Activated CD4-positive, alpha-beta T cell treated with anti-CD3 and anti-CD28 coated beads for 36 hours (primary cell): ENCODE measurements at regions of chr3 and their contacts with region 1.

Region 1: GRCh38 chr3:114383875-114384557 is 90.2 kb downstream of the TIGIT start:
- DNase-seq: peak; percentile 83
- ATAC-seq: peak; percentile 93
- H3K4me3 Mint-ChIP-seq: peak overlapping the region; percentile 53
- H3K27ac Mint-ChIP-seq: peak overlapping the region; percentile 84
- H3K4me1 Mint-ChIP-seq: peaks cover 11% of the 10 kb centered on the region
- H3K27me3 Mint-ChIP-seq: no peaks in the 10 kb centered on the region

Region 2: DNA sequence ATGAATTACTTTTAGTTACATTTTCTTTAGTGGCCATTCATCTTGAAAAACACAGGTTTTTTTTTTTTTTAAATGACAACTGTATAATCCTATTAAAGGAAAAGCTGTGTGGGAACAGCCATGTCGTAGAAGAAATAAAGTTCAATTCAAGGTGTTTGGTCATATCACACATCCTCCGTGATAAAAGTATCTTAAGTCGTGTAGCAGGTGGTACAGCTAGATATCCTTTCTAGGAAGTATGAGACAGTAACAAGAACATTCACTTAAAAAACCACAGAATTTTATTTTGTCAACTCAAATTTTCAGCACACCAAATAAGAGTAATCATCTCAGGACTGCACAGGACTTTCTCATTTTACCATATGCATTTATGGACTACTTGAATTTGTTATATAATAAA is 420.1 kb before region 1 on chr3:
- CTCF ChIA-PET with region 1: no interaction called
- POLR2A ChIA-PET with region 1: no interaction called
- intact Hi-C with region 1: no loop called
- DNase-seq: no peak
- ATAC-seq: no peak
- H3K4me3 Mint-ChIP-seq: no peak overlapping the region
- H3K27ac Mint-ChIP-seq: no peak overlapping the region
- H3K4me1 Mint-ChIP-seq: no peaks in the 10 kb centered on the region
- H3K27me3 Mint-ChIP-seq: no peaks in the 10 kb centered on the region

Region 3: DNA sequence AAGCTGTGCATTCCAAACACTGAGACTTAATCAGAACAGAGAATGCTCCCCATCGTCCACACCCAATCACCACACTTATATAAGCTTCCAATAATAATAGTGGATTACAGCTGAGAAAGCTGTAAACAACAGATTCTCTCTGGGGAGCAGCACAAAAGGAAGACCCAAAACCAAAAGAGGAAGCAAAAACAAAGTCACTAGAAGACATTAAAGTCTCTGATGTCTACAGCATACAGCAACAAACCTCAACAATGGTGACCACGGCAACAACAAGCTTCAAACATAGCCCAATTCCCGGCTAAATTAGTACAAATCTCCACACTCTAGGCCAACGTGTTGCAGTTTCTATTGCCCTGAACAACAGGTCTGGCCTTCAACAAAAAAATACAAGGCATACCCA is 398.5 kb before region 1 on chr3:
- CTCF ChIA-PET with region 1: no interaction called
- POLR2A ChIA-PET with region 1: no interaction called
- intact Hi-C with region 1: no loop called
- DNase-seq: no peak
- ATAC-seq: no peak
- H3K4me3 Mint-ChIP-seq: no peak overlapping the region
- H3K27ac Mint-ChIP-seq: no peak overlapping the region
- H3K4me1 Mint-ChIP-seq: peaks cover 2% of the 10 kb centered on the region
- H3K27me3 Mint-ChIP-seq: no peaks in the 10 kb centered on the region

Region 4: DNA sequence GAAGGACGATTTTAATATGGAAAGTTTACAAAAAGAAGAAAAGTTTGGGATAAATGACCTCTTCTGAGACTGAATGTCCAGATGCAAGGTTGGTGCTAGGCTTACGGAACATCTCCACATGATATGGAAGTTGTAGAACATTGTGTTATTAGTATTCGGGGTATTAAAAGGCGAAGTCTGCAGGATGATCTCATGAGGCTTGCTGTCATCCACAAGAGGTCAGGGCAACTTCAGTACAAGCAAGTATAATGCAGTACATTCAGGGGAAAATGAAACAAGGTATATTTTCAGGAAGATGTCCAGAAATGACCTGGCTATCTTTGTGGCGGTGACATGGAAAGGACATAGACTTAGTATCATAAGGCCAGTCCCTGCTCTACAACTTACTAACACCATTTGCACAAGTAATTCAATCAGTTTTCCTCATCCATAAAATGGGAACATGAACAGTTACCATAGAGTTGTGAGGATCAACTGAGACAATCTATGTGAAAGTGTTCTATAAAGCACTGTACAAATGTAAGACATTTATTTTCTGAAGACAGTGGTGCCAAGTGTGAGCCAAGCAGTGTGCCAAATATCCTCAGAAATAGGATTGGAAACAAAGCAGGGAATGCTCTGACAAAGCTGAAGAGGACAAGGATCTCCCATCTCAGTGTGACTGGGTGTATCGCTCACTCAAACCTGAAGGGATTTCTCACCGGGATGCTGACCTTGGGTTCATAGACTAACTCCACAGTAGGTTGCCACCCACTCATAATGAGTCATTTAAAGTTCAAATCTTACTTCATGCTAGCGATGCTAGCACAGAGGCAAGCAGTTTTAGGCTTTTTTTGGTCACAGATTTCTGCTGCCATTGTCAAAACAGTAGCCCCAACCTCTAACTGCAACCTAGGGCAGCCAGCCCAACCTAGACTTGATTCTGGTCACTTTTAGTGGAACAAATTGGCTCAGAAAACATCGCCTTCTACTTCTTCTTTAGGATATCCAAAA is 28.1 kb after region 1 on chr3:
- CTCF ChIA-PET with region 1: interaction called, 89 read pairs
- POLR2A ChIA-PET with region 1: no interaction called
- intact Hi-C with region 1: loop called in 1 of 2 experiments (anchors 1 kb)
- DNase-seq: peak; percentile 59
- ATAC-seq: peak; percentile 95
- H3K4me3 Mint-ChIP-seq: no peak overlapping the region
- H3K27ac Mint-ChIP-seq: peak overlapping the region; percentile 48
- H3K4me1 Mint-ChIP-seq: peaks cover 25% of the 10 kb centered on the region
- H3K27me3 Mint-ChIP-seq: no peaks in the 10 kb centered on the region

Region 5: DNA sequence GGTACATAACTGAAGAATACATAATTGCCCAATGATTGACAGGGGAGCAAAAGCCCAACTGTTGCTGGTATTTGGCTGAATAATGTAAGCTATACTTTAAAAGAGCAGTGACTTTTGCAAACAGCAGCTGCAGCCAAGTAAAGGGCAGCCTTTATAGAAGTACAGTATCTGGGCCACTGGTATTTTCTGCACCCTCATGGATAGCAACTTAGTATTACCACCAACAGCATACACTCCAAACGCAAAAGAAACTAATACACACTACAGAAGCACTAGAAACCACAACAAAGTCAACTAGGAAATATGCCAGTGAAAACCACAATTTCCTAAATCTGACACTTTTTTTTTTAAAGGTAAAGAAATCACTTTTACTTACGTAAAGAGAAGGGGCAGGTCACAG is 116.0 kb after region 1 on chr3:
- CTCF ChIA-PET with region 1: interaction called, 3 read pairs
- POLR2A ChIA-PET with region 1: no interaction called
- intact Hi-C with region 1: loop called in 1 of 2 experiments (anchors 10 kb)
- DNase-seq: no peak
- ATAC-seq: peak; percentile 84
- H3K4me3 Mint-ChIP-seq: no peak overlapping the region
- H3K27ac Mint-ChIP-seq: no peak overlapping the region
- H3K4me1 Mint-ChIP-seq: peaks cover 34% of the 10 kb centered on the region
- H3K27me3 Mint-ChIP-seq: peaks cover 11% of the 10 kb centered on the region

Region 6: DNA sequence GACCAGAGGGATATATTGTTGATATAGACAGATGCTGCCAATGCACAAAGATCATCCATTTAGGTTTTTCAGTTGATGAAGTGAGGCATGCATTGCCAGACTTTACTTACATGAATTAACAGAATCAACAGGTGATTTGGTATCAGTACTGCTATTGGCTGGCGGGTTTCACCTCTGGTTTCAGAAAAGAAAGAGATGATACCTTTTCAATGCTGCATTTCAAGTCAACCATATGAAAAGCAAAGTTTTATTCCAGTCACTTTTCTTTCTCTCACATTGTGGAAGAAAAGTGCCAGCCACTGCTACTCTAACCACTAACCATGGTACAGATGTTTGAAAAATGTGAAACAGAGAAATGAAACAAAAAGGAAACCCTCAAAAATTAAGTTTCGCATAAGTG is 198.9 kb after region 1 on chr3:
- CTCF ChIA-PET with region 1: no interaction called
- POLR2A ChIA-PET with region 1: no interaction called
- intact Hi-C with region 1: no loop called
- DNase-seq: peak; percentile 35
- ATAC-seq: peak; percentile 75
- H3K4me3 Mint-ChIP-seq: no peak overlapping the region
- H3K27ac Mint-ChIP-seq: no peak overlapping the region
- H3K4me1 Mint-ChIP-seq: peaks cover 9% of the 10 kb centered on the region
- H3K27me3 Mint-ChIP-seq: no peaks in the 10 kb centered on the region

Region 7: GRCh38 chr3:115085197-115085865 is 701.3 kb after region 1 on chr3:
- CTCF ChIA-PET with region 1: no interaction called
- POLR2A ChIA-PET with region 1: no interaction called
- intact Hi-C with region 1: loop called in 1 of 2 experiments (anchors 10 kb)
- DNase-seq: no peak
- ATAC-seq: no peak
- H3K4me3 Mint-ChIP-seq: no peak overlapping the region
- H3K27ac Mint-ChIP-seq: peak overlapping the region; percentile 1
- H3K4me1 Mint-ChIP-seq: peaks cover 40% of the 10 kb centered on the region
- H3K27me3 Mint-ChIP-seq: no peaks in the 10 kb centered on the region

Region 8: DNA sequence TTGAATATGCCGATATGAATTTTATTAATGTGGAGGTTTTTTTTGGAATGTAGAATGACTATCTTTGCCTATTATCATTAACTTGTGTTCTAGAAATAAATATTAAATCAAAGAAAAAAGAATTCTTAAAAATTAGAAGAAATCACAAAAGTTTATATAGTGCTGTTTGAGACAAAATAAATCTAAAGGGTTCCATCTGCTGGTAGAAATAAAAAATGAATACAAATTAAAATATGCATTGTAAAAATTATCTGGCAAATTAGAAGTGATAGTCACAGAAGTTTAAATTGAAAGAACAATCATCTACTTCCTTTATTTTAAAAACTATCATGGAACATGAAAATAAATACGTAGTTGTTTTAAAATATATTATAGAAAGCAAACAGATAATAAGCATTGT is 785.8 kb after region 1 on chr3:
- CTCF ChIA-PET with region 1: interaction called, 3 read pairs
- POLR2A ChIA-PET with region 1: no interaction called
- intact Hi-C with region 1: loop called (anchors 5 to 10 kb)
- DNase-seq: no peak
- ATAC-seq: no peak
- H3K4me3 Mint-ChIP-seq: no peak overlapping the region
- H3K27ac Mint-ChIP-seq: no peak overlapping the region
- H3K4me1 Mint-ChIP-seq: peaks cover 12% of the 10 kb centered on the region
- H3K27me3 Mint-ChIP-seq: no peaks in the 10 kb centered on the region

Region 9: GRCh38 chr3:115819785-115820384 is 1435.9 kb after region 1 on chr3:
- CTCF ChIA-PET with region 1: no interaction called
- POLR2A ChIA-PET with region 1: no interaction called
- intact Hi-C with region 1: loop called in 1 of 2 experiments (anchors 10 kb)
- DNase-seq: peak; percentile 68
- ATAC-seq: peak; percentile 90
- H3K4me3 Mint-ChIP-seq: no peak overlapping the region
- H3K27ac Mint-ChIP-seq: no peak overlapping the region
- H3K4me1 Mint-ChIP-seq: no peaks in the 10 kb centered on the region
- H3K27me3 Mint-ChIP-seq: no peaks in the 10 kb centered on the region